ENCODE measurements at regions of chr12 and their contacts with region 1.

Region 1: GRCh38 chr12:55926738-55927587 is 731 bp downstream of the PYM1 start:
- DNase-seq: peak; percentile 94
- ATAC-seq: peak; percentile 50
- H3K4me3 ChIP-seq: peak overlapping the region; percentile 88 to 100 (median 98)
- H3K4me3 Mint-ChIP-seq: peak overlapping the region; percentile 94
- H3K27ac ChIP-seq: peak overlapping the region; percentile 67 to 92
- H3K27ac Mint-ChIP-seq: peak overlapping the region; percentile 97
- H3K4me1 ChIP-seq: peaks cover 33 to 45% of the 10 kb centered on the region in 2 donors
- H3K4me1 Mint-ChIP-seq: peaks cover 54% of the 10 kb centered on the region
- H3K27me3 ChIP-seq: no peaks in the 10 kb centered on the region
- H3K27me3 Mint-ChIP-seq: no peaks in the 10 kb centered on the region
- CTCF ChIP-seq: peak; percentile 87

Region 2: GRCh38 chr12:55220725-55221124 is 706.2 kb before region 1 on chr12 and contains the start of gene OR10A7:
- CTCF ChIA-PET with region 1: no interaction called
- POLR2A ChIA-PET with region 1: no interaction called
- intact Hi-C with region 1: no loop called
- DNase-seq: no peak
- ATAC-seq: no peak
- H3K4me3 ChIP-seq: no peak within 1 kb of the TSS
- H3K4me3 Mint-ChIP-seq: no peak within 1 kb of the TSS
- H3K27ac ChIP-seq: no peak within 1 kb of the TSS
- H3K27ac Mint-ChIP-seq: no peak within 1 kb of the TSS
- H3K4me1 ChIP-seq: no peaks in the 10 kb centered on the region
- H3K4me1 Mint-ChIP-seq: no peaks in the 10 kb centered on the region
- H3K27me3 ChIP-seq: no peaks in the 10 kb centered on the region
- H3K27me3 Mint-ChIP-seq: peaks cover 22% of the 10 kb centered on the region
- CTCF ChIP-seq: no peak
- total RNA-seq, gene OR10A7: not detected in 2 replicates

Region 3: DNA sequence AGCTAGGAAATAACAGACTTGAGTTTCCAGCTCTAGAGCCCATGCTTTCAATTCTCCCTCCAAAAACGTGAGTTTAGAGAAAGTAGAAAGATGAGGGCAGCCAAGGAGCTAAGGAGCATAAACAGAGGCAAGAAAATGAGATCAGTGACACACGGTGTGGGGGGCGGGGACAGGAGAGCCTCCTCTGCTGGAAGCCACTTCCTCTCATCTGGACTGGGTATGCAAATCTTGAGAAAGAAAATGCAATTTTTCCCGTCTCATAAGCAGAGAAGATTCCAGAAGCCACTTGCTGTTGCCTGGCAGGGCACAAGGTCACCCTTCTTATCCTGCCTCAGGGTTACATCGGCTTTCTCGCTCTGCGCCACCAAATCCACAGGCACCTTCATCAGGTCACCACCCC is 284.3 kb before region 1 on chr12:
- CTCF ChIA-PET with region 1: interaction called, 4 read pairs
- POLR2A ChIA-PET with region 1: no interaction called
- intact Hi-C with region 1: loop called (anchors 10 kb)
- DNase-seq: peak; percentile 62
- ATAC-seq: peak; percentile 18
- H3K4me3 ChIP-seq: peak overlapping the region in 3 of 5 experiments; percentile 8 to 41 (median 26)
- H3K4me3 Mint-ChIP-seq: peak overlapping the region; percentile 69
- H3K27ac ChIP-seq: peak overlapping the region; percentile 19 to 57
- H3K27ac Mint-ChIP-seq: peak overlapping the region; percentile 79
- H3K4me1 ChIP-seq: peaks cover 33 to 39% of the 10 kb centered on the region in 2 donors
- H3K4me1 Mint-ChIP-seq: peaks cover 36% of the 10 kb centered on the region
- H3K27me3 ChIP-seq: peaks cover 0 to 4% (median 1%) of the 10 kb centered on the region in 4 experiments
- H3K27me3 Mint-ChIP-seq: peaks cover 1% of the 10 kb centered on the region
- CTCF ChIP-seq: no peak

Region 4: DNA sequence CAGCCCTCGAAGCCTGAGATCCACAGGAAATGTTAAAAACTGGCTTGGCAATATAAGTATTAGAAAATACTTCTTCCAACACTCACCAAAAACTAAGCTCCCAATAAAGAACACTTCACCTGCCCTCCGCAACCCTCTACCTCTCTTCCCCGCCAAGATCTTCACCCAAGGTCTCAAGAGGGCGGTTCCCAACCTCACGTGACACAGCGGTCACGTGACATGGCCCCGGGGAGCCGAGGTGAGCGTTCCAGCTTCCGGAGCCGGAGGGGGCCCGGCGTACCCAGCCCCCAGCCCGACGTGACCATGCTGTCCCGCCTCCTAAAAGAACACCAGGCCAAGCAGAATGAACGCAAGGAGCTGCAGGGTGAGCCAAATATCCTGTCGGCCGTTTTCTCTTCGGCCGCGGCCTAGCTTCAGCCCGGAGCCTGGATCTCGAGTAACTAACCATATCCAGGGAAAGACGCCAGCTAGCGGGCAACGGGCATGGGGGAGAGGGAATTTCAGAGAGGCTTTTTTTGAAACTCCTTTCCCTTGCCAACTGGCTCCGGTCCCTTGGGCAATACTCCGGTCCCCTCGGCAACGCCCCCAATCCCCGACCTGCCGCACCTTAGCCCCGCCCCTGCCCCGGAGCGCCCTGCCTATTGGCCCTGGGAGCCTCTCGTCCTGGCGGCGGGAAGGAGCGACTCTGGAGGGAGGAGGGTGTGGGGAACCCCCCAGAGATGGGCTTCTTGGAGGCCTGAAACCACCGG is 211.0 kb before region 1 on chr12 and contains the start of gene BLOC1S1:
- CTCF ChIA-PET with region 1: no interaction called
- POLR2A ChIA-PET with region 1: interaction called, 7 read pairs
- intact Hi-C with region 1: loop called (anchors 2 kb)
- DNase-seq: peak; percentile 95
- ATAC-seq: peak; percentile 95
- H3K4me3 ChIP-seq: peak within 1 kb of the TSS; percentile 86 to 98 (median 97)
- H3K4me3 Mint-ChIP-seq: peak within 1 kb of the TSS; percentile 98
- H3K27ac ChIP-seq: peak within 1 kb of the TSS; percentile 81 to 84
- H3K27ac Mint-ChIP-seq: peak within 1 kb of the TSS; percentile 99
- H3K4me1 ChIP-seq: peaks cover 16 to 30% of the 10 kb centered on the region in 2 donors
- H3K4me1 Mint-ChIP-seq: peaks cover 38% of the 10 kb centered on the region
- H3K27me3 ChIP-seq: no peaks in the 10 kb centered on the region
- H3K27me3 Mint-ChIP-seq: no peaks in the 10 kb centered on the region
- CTCF ChIP-seq: no peak
- total RNA-seq, gene BLOC1S1: 67.1 and 71.1 TPM in 2 replicates

Region 5: DNA sequence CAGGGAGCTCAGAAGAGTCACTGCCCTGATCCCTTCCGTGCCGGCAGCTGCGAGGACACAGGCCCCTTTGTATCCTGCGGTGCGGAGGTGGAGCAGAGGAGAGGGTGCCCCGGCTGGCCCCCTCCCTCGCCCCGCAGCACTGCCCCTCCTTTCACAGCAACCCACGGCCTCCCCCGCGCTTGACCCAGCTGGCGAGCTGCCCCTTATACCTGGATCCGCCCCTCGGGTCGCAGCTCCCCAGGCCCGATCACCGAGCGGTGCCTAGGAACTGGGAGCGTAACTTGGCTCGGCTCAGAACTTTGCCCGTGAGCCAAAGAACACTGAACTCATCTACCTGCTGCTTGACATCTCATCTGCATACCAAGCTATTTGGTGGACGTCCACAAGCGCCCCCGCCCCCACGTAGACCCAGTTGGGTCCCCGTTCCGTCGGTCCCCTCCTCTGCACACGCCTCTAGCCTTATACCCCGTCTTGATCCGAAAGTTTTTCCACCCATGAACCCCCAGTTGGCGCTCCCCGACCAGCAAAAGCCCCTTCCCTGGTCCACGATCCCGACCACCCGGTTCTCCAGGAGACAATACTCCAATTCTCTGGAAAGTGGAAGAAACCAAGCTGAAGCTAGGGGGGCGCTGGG is 96.9 kb before region 1 on chr12:
- CTCF ChIA-PET with region 1: interaction called, 13 read pairs
- POLR2A ChIA-PET with region 1: interaction called, 25 read pairs
- intact Hi-C with region 1: loop called (anchors 1 kb)
- DNase-seq: peak; percentile 65
- ATAC-seq: peak; percentile 4
- H3K4me3 ChIP-seq: peak overlapping the region; percentile 68 to 96 (median 84)
- H3K4me3 Mint-ChIP-seq: peak overlapping the region; percentile 99
- H3K27ac ChIP-seq: peak overlapping the region; percentile 57 to 60
- H3K27ac Mint-ChIP-seq: peak overlapping the region; percentile 97
- H3K4me1 ChIP-seq: peaks cover 36 to 49% of the 10 kb centered on the region in 2 donors
- H3K4me1 Mint-ChIP-seq: peaks cover 48% of the 10 kb centered on the region
- H3K27me3 ChIP-seq: no peaks in the 10 kb centered on the region
- H3K27me3 Mint-ChIP-seq: no peaks in the 10 kb centered on the region
- CTCF ChIP-seq: no peak

Region 6: DNA sequence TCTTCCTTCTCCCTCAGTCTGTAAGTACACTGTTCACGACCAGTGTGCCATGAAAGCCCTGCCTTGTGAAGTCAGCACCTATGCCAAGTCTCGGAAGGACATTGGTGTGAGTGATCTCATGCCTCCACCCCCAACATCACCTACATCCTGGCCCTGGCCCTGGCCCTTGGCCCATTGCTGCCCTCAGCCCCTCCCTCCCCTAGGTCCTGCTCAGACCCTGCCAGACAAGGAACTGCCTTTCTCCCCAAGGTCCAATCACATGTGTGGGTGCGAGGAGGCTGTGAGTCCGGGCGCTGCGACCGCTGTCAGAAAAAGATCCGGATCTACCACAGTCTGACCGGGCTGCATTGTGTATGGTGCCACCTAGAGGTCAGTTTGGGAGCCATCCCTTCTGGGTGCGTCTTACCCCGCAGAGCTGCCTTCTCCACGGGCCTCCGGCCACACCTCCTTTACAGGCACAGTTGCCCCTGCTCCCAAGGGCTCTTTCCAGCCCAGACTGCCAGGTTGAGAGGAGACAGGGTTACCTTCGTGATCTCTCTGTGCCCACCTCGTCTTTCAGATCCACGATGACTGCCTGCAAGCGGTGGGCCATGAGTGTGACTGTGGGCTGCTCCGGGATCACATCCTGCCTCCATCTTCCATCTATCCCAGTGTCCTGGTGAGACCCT is 13.2 kb after region 1 on chr12:
- CTCF ChIA-PET with region 1: interaction called, 155 read pairs
- POLR2A ChIA-PET with region 1: interaction called, 7 read pairs
- intact Hi-C with region 1: loop called (anchors 1 kb)
- DNase-seq: peak; percentile 89
- ATAC-seq: peak; percentile 99
- H3K4me3 ChIP-seq: no peak overlapping the region
- H3K4me3 Mint-ChIP-seq: peak overlapping the region; percentile 13
- H3K27ac ChIP-seq: peak overlapping the region; percentile 35 to 57
- H3K27ac Mint-ChIP-seq: peak overlapping the region; percentile 84
- H3K4me1 ChIP-seq: peaks cover 7 to 12% of the 10 kb centered on the region in 2 donors
- H3K4me1 Mint-ChIP-seq: peaks cover 19% of the 10 kb centered on the region
- H3K27me3 ChIP-seq: no peaks in the 10 kb centered on the region
- H3K27me3 Mint-ChIP-seq: no peaks in the 10 kb centered on the region
- CTCF ChIP-seq: peak; percentile 85

Region 7: GRCh38 chr12:56041552-56042429 is 114.8 kb after region 1 on chr12 and contains the start of gene RPS26:
- CTCF ChIA-PET with region 1: interaction called, 11 read pairs
- POLR2A ChIA-PET with region 1: interaction called, 7 read pairs
- intact Hi-C with region 1: loop called (anchors 1 kb)
- DNase-seq: peak; percentile 99
- ATAC-seq: peak; percentile 93
- H3K4me3 ChIP-seq: peak within 1 kb of the TSS; percentile 70 to 99 (median 91)
- H3K4me3 Mint-ChIP-seq: peak within 1 kb of the TSS; percentile 98
- H3K27ac ChIP-seq: peak within 1 kb of the TSS; percentile 82 to 90
- H3K27ac Mint-ChIP-seq: peak within 1 kb of the TSS; percentile 97
- H3K4me1 ChIP-seq: peaks cover 19 to 21% of the 10 kb centered on the region in 2 donors
- H3K4me1 Mint-ChIP-seq: peaks cover 24% of the 10 kb centered on the region
- H3K27me3 ChIP-seq: no peaks in the 10 kb centered on the region
- H3K27me3 Mint-ChIP-seq: no peaks in the 10 kb centered on the region
- CTCF ChIP-seq: peak; percentile 67
- total RNA-seq, gene RPS26: 19.4 and 21.0 TPM in 2 replicates

Region 8: DNA sequence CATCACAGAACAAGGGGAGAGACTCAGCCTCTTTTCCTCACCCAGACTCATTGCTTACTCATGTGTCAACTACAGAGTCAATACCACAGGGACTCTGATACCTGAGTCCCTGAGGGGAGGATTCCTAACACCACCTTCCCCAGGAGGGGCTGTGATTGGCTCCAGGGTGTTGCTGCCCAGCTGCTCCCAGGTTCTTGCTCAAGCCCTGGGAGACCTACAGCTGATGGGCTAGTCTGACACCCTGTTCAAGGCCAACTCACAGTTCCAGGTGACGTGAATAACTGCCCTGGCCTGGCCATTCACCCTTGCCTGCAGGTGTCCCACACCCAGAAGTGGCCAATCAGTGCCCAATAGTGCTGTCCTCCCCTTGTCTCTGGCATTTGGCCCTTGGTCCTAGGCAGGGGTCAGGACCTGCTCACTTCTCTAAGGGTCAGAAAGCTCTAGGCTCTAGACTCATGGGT is 550.0 kb after region 1 on chr12:
- CTCF ChIA-PET with region 1: no interaction called
- POLR2A ChIA-PET with region 1: no interaction called
- intact Hi-C with region 1: no loop called
- DNase-seq: no peak
- ATAC-seq: no peak
- H3K4me3 ChIP-seq: no peak overlapping the region
- H3K4me3 Mint-ChIP-seq: no peak overlapping the region
- H3K27ac ChIP-seq: no peak overlapping the region
- H3K27ac Mint-ChIP-seq: no peak overlapping the region
- H3K4me1 ChIP-seq: no peaks in the 10 kb centered on the region
- H3K4me1 Mint-ChIP-seq: peaks cover 5% of the 10 kb centered on the region
- H3K27me3 ChIP-seq: no peaks in the 10 kb centered on the region
- H3K27me3 Mint-ChIP-seq: no peaks in the 10 kb centered on the region
- CTCF ChIP-seq: no peak